Common myeloid progenitor, CD34-positive (primary cell): ENCODE measurements at regions of chr2 and their contacts with region 1.

Region 1: GRCh38 chr2:85288244-85288725 is 39.5 kb downstream of the TGOLN2 start:
- DNase-seq: no peak
- H3K4me3 ChIP-seq: no peak overlapping the region
- H3K27ac ChIP-seq: no peak overlapping the region
- H3K4me1 ChIP-seq: peaks cover 0 to 14% (median 2%) of the 10 kb centered on the region in 4 experiments
- H3K27me3 ChIP-seq: no peaks in the 10 kb centered on the region

Region 2: DNA sequence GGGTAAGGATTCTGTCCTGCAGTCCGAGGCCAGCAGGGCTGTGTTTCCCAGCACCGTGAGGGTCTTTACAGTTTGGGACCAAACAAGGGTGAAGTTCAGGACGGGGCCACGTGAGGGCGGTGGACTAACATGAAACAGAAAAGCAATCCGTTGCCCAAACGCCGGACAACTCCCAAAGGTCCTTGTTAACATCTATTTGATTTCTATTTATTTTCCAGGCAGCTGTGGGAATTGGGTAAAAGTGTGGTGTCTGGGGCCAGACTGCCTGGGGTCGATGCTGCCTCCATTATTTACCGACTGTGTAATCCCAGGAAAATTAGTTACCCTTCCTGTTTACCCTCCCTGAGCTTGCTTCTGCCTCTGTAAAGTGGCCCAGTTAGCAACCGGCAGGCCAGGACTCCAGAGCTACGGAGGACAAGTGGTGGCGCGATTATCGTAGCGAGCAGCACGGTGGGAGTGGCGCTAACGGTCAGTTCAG is 221.4 kb before region 1 on chr2:
- CTCF ChIA-PET with region 1: interaction called, 47 read pairs
- POLR2A ChIA-PET with region 1: no interaction called
- DNase-seq: peak; percentile 69 to 84 (median 79)
- H3K4me3 ChIP-seq: peak overlapping the region in 6 of 7 experiments; percentile 13 to 58 (median 39)
- H3K27ac ChIP-seq: no peak overlapping the region
- H3K4me1 ChIP-seq: peaks cover 0 to 4% (median 3%) of the 10 kb centered on the region in 4 experiments
- H3K27me3 ChIP-seq: peaks cover 0 to 3% (median 0%) of the 10 kb centered on the region in 5 experiments